AG04449 (cell line): ENCODE measurements at regions of chr11 and their contacts with region 1.

Region 1: GRCh38 chr11:27485930-27486773 is 13.6 kb upstream of the LGR4 start:
- DNase-seq: no peak
- H3K4me3 ChIP-seq: no peak overlapping the region
- CTCF ChIP-seq: peak; percentile 60

Region 2: GRCh38 chr11:27183672-27184457 is 302.3 kb before region 1 on chr11:
- CTCF ChIA-PET with region 1: interaction called, 278 read pairs
- POLR2A ChIA-PET with region 1: no interaction called
- DNase-seq: peak; percentile 38
- H3K4me3 ChIP-seq: no peak overlapping the region
- CTCF ChIP-seq: peak; percentile 47

Region 3: GRCh38 chr11:27209562-27210005 is 276.6 kb before region 1 on chr11:
- CTCF ChIA-PET with region 1: interaction called, 35 read pairs
- POLR2A ChIA-PET with region 1: no interaction called
- DNase-seq: peak; percentile 78
- H3K4me3 ChIP-seq: no peak overlapping the region
- CTCF ChIP-seq: no peak

Region 4: GRCh38 chr11:27274854-27275395 is 211.2 kb before region 1 on chr11:
- CTCF ChIA-PET with region 1: no interaction called
- POLR2A ChIA-PET with region 1: no interaction called
- DNase-seq: no peak
- H3K4me3 ChIP-seq: no peak overlapping the region
- CTCF ChIP-seq: no peak

Region 5: GRCh38 chr11:27305751-27306150 is 180.4 kb before region 1 on chr11:
- CTCF ChIA-PET with region 1: interaction called, 11 read pairs
- POLR2A ChIA-PET with region 1: no interaction called
- DNase-seq: no peak
- H3K4me3 ChIP-seq: no peak overlapping the region
- CTCF ChIP-seq: no peak

Region 6: GRCh38 chr11:27472398-27473016 is 13.6 kb before region 1 on chr11 and contains the start of gene LGR4:
- CTCF ChIA-PET with region 1: interaction called, 48 read pairs
- POLR2A ChIA-PET with region 1: interaction called, 4 read pairs
- DNase-seq: peak; percentile 72
- H3K4me3 ChIP-seq: peak within 1 kb of the TSS; percentile 75
- CTCF ChIP-seq: no peak